AG04449 (cell line): ENCODE measurements at regions of chr2 and their contacts with region 1.

Region 1: GRCh38 chr2:202034249-202035088 is 814 bp downstream of the FZD7 start:
- DNase-seq: no peak
- H3K4me3 ChIP-seq: peak overlapping the region; percentile 91
- CTCF ChIP-seq: no peak

Region 2: GRCh38 chr2:201795607-201796477 is 238.6 kb before region 1 on chr2:
- CTCF ChIA-PET with region 1: interaction called, 12 read pairs
- POLR2A ChIA-PET with region 1: interaction called, 3 read pairs
- DNase-seq: no peak
- H3K4me3 ChIP-seq: no peak overlapping the region
- CTCF ChIP-seq: peak; percentile 81

Region 3: GRCh38 chr2:202158796-202159195 is 124.3 kb after region 1 on chr2:
- CTCF ChIA-PET with region 1: interaction called, 11 read pairs
- POLR2A ChIA-PET with region 1: no interaction called
- DNase-seq: no peak
- H3K4me3 ChIP-seq: no peak overlapping the region
- CTCF ChIP-seq: peak; percentile 66

Region 4: DNA sequence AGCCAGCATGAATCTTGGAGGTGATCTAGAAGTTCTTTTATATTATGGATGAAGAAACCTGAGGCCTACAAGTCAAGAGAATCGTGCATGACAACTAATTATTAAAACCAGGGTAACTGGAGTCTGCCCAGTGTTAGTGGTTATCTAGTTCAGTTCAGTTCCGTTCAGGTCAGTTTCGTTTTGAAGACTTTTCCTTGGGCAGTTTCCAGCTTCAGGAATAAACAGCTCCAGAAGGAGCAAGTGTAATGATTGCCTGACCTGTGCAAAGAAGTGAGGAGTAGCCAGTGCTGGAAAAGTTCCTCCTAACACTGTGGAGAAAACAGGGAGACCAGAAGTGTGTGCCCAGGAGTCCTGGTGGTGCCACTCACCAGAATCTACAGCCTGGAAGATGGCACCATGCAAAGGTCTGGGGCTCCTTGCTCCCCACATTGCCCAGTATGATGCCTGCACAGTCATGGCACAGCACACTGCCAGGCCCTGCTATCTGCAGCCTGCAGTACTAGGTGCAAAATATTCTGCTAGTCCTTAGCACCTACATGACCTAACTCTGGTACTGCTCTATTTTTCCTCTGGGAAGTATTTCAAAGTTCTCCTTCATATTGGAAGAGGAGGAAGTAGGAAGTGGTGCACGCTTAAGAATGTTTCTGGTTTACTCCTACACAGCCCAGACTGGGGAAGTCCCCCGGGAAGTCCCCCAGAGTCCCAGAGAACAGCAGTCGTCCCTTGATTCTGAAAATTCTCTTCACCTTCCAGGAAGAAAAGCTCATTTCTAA is 138.2 kb after region 1 on chr2:
- CTCF ChIA-PET with region 1: interaction called, 32 read pairs
- POLR2A ChIA-PET with region 1: interaction called, 4 read pairs
- DNase-seq: no peak
- H3K4me3 ChIP-seq: no peak overlapping the region
- CTCF ChIP-seq: no peak